GM12878 (cell line): ENCODE measurements at regions of chr15 and their contacts with region 1.

Region 1: DNA sequence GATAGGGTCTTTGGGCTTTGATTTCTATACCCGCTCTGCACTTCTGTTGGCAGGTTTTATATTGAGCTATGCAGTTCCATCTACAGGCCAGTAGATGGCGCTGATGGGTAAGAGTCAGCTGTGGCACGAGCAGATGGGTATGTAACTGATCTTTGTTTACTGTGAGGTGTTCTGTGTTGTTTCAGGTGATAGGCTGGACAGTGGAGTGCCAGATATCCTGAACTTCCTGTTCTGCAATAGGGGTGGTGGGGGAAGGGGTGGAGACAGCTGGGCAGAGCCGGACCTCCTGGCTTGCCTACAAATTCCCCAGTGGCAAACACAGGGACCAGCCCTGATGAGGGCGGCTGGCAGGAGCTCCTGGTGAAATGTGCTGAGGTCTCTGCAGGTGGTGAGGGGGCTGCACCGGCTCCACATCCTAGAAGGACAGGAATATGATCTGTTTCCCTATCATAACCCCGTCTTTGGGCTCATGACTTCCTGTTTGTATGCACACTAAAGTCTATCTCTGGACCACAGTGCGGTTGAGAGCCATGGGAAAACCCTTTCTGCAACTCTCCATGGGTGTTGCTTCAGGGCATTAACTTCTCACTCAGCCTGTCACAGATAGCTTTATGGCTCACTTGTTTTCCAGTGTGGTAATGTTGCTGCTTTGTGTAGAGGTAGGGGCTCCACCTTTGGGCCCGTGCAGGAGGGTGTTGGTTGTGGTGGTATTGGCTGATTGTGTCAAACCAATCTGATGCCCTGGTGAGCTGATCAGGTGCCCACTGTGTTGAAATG is 13.4 kb upstream of the FAM98B start:
- DNase-seq: peak; percentile 44
- ATAC-seq: peak; percentile 92
- H3K4me3 ChIP-seq: no peak overlapping the region
- H3K27ac ChIP-seq: no peak overlapping the region
- H3K4me1 ChIP-seq: peaks cover 8% of the 10 kb centered on the region
- H3K27me3 ChIP-seq: peaks cover 0 to 3% of the 10 kb centered on the region in 2 experiments; a peak in 2 of 4 replicates
- CTCF ChIP-seq: peak; percentile 90 to 94 (median 91)
- EP300 ChIP-seq: no peak
- POLR2A ChIP-seq: no peak
- RAD21 ChIP-seq: peak; percentile 96

Region 2: GRCh38 chr15:38389924-38390542 is 50.5 kb before region 1 on chr15:
- CTCF ChIA-PET with region 1: interaction called, 6 read pairs
- POLR2A ChIA-PET with region 1: no interaction called
- RAD21 ChIA-PET with region 1: interaction called, 13 read pairs
- SMC1A ChIA-PET with region 1: no interaction called
- in situ Hi-C with region 1: no loop called
- intact Hi-C with region 1: no loop called
- DNase-seq: peak; percentile 15
- ATAC-seq: peak; percentile 91
- H3K4me3 ChIP-seq: no peak overlapping the region
- H3K27ac ChIP-seq: no peak overlapping the region
- H3K4me1 ChIP-seq: no peaks in the 10 kb centered on the region
- H3K27me3 ChIP-seq: no peaks in the 10 kb centered on the region
- CTCF ChIP-seq: peak; percentile 80 to 88 (median 83)
- EP300 ChIP-seq: no peak
- POLR2A ChIP-seq: no peak
- RAD21 ChIP-seq: peak; percentile 79

Region 3: GRCh38 chr15:38461066-38461833 is 20.7 kb after region 1 on chr15:
- CTCF ChIA-PET with region 1: interaction called, 59 read pairs
- POLR2A ChIA-PET with region 1: no interaction called
- RAD21 ChIA-PET with region 1: interaction called, 27 read pairs
- SMC1A ChIA-PET with region 1: interaction called, 27 read pairs
- in situ Hi-C with region 1: no loop called
- intact Hi-C with region 1: no loop called
- DNase-seq: no peak
- ATAC-seq: peak; percentile 92
- H3K4me3 ChIP-seq: 0 out of 2 replicates have a peak overlapping the region, but pooled peaks have one; percentile 13
- H3K27ac ChIP-seq: peak overlapping the region; percentile 40
- H3K4me1 ChIP-seq: peaks cover 15% of the 10 kb centered on the region; the same call in 1 of the 2 replicates
- H3K27me3 ChIP-seq: no peaks in the 10 kb centered on the region
- CTCF ChIP-seq: no peak
- EP300 ChIP-seq: 0 out of 4 replicates have a peak, but pooled peaks of 1 of the 2 experiments have one; percentile 36
- POLR2A ChIP-seq: no peak
- RAD21 ChIP-seq: no peak

Region 4: DNA sequence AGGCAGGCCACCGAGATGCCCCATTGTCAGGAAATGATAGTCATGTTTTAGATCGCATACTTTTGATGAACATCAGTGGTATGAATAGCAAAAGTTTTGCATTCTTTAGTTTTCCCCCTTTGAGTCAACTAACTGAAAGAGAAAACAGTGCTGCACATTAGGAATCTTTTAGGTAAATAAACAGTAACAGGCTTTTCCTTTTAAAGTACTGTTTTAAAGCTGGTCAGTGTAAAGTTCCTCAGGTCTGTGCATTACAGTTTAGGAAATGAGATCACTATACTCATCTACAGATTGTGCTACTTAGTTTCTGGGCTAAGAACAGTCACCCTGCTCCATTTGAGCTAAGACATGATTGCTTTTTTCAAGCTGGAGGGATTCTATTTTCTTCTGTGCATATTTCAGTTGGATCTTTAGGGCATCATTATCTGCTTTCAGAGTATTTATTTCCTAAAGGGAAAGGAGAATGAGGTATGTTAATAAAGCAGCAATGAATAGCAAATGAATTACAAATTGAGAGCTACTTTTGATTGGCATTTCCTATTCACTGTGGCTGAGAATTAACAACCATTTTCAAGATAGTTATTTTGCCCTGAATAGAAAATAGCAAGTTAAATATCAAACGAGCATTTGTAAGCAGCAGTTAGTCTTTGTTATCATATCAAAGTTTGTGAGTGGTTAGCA is 49.8 kb after region 1 on chr15:
- CTCF ChIA-PET with region 1: interaction called, 15 read pairs
- POLR2A ChIA-PET with region 1: no interaction called
- RAD21 ChIA-PET with region 1: interaction called, 5 read pairs
- SMC1A ChIA-PET with region 1: interaction called, 5 read pairs
- in situ Hi-C with region 1: no loop called
- intact Hi-C with region 1: no loop called
- DNase-seq: no peak
- ATAC-seq: no peak
- H3K4me3 ChIP-seq: no peak overlapping the region
- H3K27ac ChIP-seq: no peak overlapping the region
- H3K4me1 ChIP-seq: no peaks in the 10 kb centered on the region
- H3K27me3 ChIP-seq: no peaks in the 10 kb centered on the region
- CTCF ChIP-seq: no peak
- EP300 ChIP-seq: no peak
- POLR2A ChIP-seq: no peak
- RAD21 ChIP-seq: no peak

Region 5: GRCh38 chr15:38554354-38554753 is 113.8 kb after region 1 on chr15:
- CTCF ChIA-PET with region 1: interaction called, 19 read pairs
- POLR2A ChIA-PET with region 1: no interaction called
- RAD21 ChIA-PET with region 1: interaction called, 8 read pairs
- SMC1A ChIA-PET with region 1: interaction called, 17 read pairs
- in situ Hi-C with region 1: no loop called
- intact Hi-C with region 1: no loop called
- DNase-seq: no peak
- ATAC-seq: peak; percentile 80
- H3K4me3 ChIP-seq: no peak overlapping the region
- H3K27ac ChIP-seq: peak overlapping the region; percentile 59; the same call in 1 of the 2 replicates
- H3K4me1 ChIP-seq: peaks cover 45% of the 10 kb centered on the region
- H3K27me3 ChIP-seq: no peaks in the 10 kb centered on the region
- CTCF ChIP-seq: no peak
- EP300 ChIP-seq: no peak
- POLR2A ChIP-seq: no peak
- RAD21 ChIP-seq: no peak

Region 6: GRCh38 chr15:38647683-38648082 is 207.1 kb after region 1 on chr15:
- CTCF ChIA-PET with region 1: interaction called, 10 read pairs
- POLR2A ChIA-PET with region 1: no interaction called
- RAD21 ChIA-PET with region 1: interaction called, 6 read pairs
- SMC1A ChIA-PET with region 1: no interaction called
- in situ Hi-C with region 1: no loop called
- intact Hi-C with region 1: no loop called
- DNase-seq: no peak
- ATAC-seq: no peak
- H3K4me3 ChIP-seq: no peak overlapping the region
- H3K27ac ChIP-seq: no peak overlapping the region
- H3K4me1 ChIP-seq: peaks cover 27% of the 10 kb centered on the region
- H3K27me3 ChIP-seq: no peaks in the 10 kb centered on the region
- CTCF ChIP-seq: peak in 2 of 3 experiments; percentile 5 to 17; a peak in 1 of 6 replicates
- EP300 ChIP-seq: no peak
- POLR2A ChIP-seq: no peak
- RAD21 ChIP-seq: peak; percentile 23; the same call in 1 of the 2 replicates

Region 7: DNA sequence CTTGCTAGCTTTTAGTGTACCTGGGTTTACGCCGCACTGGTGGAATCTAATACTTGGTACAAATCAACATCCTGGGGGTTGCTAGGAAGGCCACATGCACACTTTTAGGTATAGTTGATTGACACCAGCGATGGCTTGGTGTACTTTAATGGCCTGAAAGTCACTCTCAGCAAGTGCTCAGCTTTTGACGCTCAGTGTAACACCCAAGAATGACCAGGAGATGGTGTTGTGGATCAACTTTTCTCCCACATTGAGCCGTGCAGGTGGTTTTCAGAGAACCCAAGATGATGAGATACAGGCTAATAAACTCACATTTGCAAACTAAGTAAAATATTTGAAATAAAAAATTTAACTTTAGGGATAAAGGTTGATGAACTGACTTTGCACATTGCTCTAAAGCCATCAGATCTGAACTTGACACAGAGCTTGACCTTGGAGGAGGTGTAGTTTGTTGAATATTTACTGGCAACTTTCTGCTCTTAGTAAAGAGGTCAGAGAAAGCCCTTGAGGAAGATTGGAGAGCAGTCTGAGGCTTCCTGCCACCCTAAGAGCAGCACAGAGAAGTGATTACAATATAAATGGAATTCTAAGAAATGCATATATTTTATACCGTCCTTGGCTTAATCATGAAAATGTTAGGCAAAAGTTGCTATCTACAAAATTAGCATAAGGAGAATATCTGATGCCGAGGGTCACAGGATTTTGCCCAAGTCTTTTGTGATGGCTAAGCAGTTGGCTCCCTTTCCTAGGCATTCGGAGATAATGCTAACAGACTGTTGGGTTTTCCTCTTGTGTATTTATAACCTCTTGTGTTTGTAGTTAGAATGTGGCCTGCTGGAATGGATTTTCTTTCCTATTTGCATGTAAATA is 267.5 kb after region 1 on chr15:
- CTCF ChIA-PET with region 1: interaction called, 386 read pairs
- POLR2A ChIA-PET with region 1: no interaction called
- RAD21 ChIA-PET with region 1: interaction called, 224 read pairs
- SMC1A ChIA-PET with region 1: interaction called, 45 read pairs
- in situ Hi-C with region 1: no loop called
- intact Hi-C with region 1: no loop called
- DNase-seq: no peak
- ATAC-seq: peak; percentile 98
- H3K4me3 ChIP-seq: no peak overlapping the region
- H3K27ac ChIP-seq: no peak overlapping the region
- H3K4me1 ChIP-seq: no peaks in the 10 kb centered on the region
- H3K27me3 ChIP-seq: no peaks in the 10 kb centered on the region
- CTCF ChIP-seq: peak; percentile 75 to 82 (median 76)
- EP300 ChIP-seq: no peak
- POLR2A ChIP-seq: no peak
- RAD21 ChIP-seq: peak; percentile 91